Heart right ventricle (tissue), 16 donors: ENCODE measurements at regions of chr20 and their contacts with region 1.

Region 1: GRCh38 chr20:34089655-34090345 is 22.2 kb downstream of the EIF2S2 start:
- DNase-seq: peak in 1 of 2 donors; percentile 58
- ATAC-seq: peak; percentile 55 to 88 (median 80)
- H3K4me3 ChIP-seq: no peak overlapping the region
- H3K27ac ChIP-seq: peak overlapping the region in 4 of 10 donors; percentile 38 to 44 (median 42)
- H3K4me1 ChIP-seq: peaks cover 0 to 31% (median 24%) of the 10 kb centered on the region in 9 donors
- H3K27me3 ChIP-seq: no peaks in the 10 kb centered on the region
- CTCF ChIP-seq: no peak

Region 2: DNA sequence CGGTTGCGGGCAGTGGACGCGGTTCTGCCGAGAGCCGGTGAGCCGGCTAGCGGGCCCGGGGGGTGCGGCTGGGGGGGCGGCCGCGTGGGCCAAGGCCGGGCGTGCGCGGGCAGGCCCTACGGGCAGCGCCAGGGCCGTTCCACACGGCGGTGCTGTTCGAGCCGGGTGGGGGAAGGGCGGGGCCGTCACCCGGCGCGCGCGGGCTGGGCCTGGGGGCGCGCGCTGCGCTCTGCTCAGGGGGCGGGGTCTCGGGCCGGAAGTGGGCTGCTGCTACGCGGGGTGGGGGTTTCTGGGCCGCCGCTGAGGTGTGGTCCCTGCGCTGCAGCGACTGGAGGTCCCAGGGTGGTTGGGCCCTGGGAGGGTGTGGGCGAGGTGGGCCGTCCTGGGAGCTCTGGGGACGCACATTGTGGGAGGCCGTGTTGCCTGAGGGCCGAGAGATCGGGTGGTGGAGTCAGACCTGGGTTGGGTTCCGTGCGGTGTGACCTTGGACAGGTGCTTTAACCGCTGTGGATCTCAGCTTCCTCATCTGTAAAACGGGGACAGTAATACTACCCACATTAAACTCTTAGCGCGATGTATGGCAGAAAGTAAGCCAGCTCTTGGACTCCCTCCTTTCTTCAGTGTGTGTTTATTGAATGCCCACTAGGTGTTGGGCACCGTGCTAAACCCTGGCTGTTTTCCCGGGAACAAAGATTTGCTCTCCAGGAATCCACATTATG is 1269.6 kb before region 1 on chr20:
- intact Hi-C with region 1: no loop called
- DNase-seq: peak in 1 of 2 donors; percentile 74
- ATAC-seq: peak; percentile 71 to 94 (median 89)
- H3K4me3 ChIP-seq: peak overlapping the region; percentile 51 to 90 (median 80)
- H3K27ac ChIP-seq: peak overlapping the region; percentile 73 to 94 (median 90)
- H3K4me1 ChIP-seq: peaks cover 7 to 49% (median 38%) of the 10 kb centered on the region in 9 donors
- H3K27me3 ChIP-seq: no peaks in the 10 kb centered on the region
- CTCF ChIP-seq: no peak

Region 3: DNA sequence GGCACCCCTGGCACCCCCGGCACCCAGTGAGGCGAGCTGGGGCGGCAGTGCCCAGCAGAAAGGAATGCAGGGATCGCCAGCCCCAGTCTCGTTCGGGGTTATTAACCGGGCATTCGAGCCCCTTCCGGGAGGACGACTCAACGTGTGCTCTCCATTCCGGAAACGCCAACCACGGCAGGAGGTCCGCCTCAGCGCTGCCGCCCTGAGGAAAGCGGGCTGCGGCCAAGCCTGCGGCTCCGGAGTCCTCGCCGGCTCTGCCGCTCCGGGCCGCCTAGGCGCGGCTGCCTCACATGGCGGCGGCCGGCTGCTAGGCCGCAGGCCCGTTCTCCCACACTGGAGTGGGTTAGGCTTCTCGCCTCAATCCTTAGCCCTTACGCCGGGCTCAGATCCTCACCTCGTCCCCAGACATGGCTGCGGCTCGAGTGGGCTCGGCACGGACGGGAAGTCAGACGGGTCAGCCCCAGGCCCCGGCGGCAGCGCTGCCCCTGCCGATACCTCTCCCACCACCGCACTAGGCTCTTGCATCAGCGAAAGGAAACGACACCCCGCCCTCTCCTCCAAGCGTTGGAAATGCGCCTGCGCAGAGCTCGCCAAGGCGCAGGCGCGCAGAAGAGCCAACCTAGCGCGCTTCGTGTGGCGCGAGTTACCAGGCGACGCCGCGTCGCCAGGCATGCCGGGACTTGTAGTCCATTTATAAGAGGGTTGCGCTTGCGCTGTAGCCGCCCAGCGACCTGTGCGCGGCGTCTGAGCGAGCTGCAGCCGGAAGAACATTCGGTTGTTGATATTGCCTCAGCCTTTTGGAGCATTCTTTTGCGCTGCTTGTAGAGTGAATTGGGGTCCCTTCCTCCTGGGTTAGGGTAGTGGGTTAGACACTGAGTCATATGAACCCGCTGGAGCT is 22.2 kb after region 1 on chr20 and contains the start of gene EIF2S2:
- intact Hi-C with region 1: loop called in 1 of 10 experiments (anchors 2 kb)
- DNase-seq: peak; percentile 94 to 96
- ATAC-seq: peak; percentile 97 to 98 (median 98)
- H3K4me3 ChIP-seq: peak within 1 kb of the TSS; percentile 65 to 95 (median 80)
- H3K27ac ChIP-seq: peak within 1 kb of the TSS; percentile 77 to 98 (median 94)
- H3K4me1 ChIP-seq: peaks cover 4 to 50% (median 42%) of the 10 kb centered on the region in 9 donors
- H3K27me3 ChIP-seq: no peaks in the 10 kb centered on the region
- CTCF ChIP-seq: no peak
- total RNA-seq, gene EIF2S2: 32.4 to 59.7 (median 41.1) TPM

Region 4: DNA sequence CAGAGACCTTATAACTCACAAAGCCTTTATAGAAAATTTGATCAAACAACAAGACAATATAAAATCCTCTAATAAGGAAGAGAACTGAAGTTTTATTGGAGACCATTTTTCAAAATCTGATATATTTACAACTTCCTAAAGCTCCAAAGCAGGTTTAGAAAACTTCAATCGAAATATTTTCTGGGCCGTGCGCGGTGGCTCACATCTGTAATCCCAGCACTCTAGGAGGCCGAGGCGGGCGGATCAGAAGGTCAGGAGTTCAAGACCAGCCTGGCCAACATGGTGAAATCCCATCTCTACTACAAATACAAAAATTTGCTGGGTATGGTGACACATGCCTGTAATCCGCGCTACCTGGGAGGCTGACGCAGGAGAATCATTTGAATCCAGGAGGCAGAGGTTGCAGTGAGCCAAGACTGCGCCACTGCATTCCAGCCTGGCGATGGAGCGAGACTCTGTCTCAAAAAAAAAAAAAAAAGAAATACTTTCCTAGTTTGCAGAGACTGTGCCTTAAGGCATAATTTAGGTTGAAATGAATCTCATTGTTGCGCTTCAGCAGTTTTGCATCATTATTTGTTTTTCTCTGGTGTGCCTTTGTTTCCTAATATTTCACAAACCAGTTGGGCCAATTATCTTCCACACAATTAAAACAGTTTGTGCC is 90.8 kb after region 1 on chr20:
- intact Hi-C with region 1: no loop called
- DNase-seq: no peak
- ATAC-seq: no peak
- H3K4me3 ChIP-seq: no peak overlapping the region
- H3K27ac ChIP-seq: no peak overlapping the region
- H3K4me1 ChIP-seq: no peaks in the 10 kb centered on the region
- H3K27me3 ChIP-seq: peaks cover 0 to 7% (median 0%) of the 10 kb centered on the region in 7 donors
- CTCF ChIP-seq: no peak

Region 5: DNA sequence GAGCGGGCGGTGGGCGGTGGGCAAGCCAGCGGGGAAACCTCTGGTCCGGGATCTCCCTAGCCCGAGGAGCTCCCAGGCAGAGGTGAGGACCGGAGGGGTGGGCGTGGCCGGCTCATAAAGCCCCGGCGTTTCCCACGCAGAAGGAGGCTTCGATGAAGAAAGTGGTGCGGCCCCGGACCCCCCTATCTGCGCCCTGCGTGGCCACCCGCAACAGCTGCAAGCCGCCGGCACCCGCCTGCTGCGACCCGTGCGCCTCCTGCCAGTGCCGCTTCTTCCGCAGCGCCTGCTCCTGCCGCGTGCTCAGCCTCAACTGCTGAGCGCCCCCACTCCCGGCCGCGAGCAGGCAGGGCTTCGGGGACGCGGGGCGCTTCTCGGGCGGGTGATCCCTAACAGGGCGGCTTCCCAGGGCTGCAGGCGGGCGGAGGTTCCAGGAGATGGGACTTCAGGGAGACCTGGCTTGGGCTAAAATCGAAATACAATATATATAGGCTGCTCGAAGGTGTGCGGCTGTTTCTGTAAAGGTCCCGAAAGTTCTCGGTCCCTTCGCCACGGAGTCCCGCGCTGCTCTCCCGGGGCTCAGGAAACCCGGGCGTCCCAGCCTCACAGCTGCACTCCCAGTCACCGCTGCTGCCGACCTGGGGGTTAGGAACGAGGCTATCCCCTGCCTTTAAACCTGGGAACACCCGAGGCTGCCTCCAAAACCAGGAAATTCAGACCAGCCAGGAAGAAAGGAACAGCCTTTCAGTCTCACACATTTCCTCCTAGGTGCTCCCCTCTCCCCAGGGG is 179.2 kb after region 1 on chr20:
- intact Hi-C with region 1: no loop called
- DNase-seq: peak; percentile 6 to 45
- ATAC-seq: peak; percentile 58 to 78 (median 71)
- H3K4me3 ChIP-seq: peak overlapping the region in 9 of 10 donors; percentile 33 to 53 (median 43)
- H3K27ac ChIP-seq: peak overlapping the region in 8 of 10 donors; percentile 15 to 77 (median 40)
- H3K4me1 ChIP-seq: peaks cover 4 to 23% (median 15%) of the 10 kb centered on the region in 9 donors
- H3K27me3 ChIP-seq: no peaks in the 10 kb centered on the region
- CTCF ChIP-seq: peak in 2 of 9 donors; percentile 7 to 13

Region 6: GRCh38 chr20:34426026-34426425 is 336.2 kb after region 1 on chr20:
- intact Hi-C with region 1: no loop called
- DNase-seq: no peak
- ATAC-seq: no peak
- H3K4me3 ChIP-seq: no peak overlapping the region
- H3K27ac ChIP-seq: peak overlapping the region in 4 of 10 donors; percentile 12 to 53 (median 34)
- H3K4me1 ChIP-seq: peaks cover 0 to 34% (median 14%) of the 10 kb centered on the region in 9 donors
- H3K27me3 ChIP-seq: no peaks in the 10 kb centered on the region
- CTCF ChIP-seq: no peak